ENCODE measurements at regions of chr1 and their contacts with region 1.

Region 1: DNA sequence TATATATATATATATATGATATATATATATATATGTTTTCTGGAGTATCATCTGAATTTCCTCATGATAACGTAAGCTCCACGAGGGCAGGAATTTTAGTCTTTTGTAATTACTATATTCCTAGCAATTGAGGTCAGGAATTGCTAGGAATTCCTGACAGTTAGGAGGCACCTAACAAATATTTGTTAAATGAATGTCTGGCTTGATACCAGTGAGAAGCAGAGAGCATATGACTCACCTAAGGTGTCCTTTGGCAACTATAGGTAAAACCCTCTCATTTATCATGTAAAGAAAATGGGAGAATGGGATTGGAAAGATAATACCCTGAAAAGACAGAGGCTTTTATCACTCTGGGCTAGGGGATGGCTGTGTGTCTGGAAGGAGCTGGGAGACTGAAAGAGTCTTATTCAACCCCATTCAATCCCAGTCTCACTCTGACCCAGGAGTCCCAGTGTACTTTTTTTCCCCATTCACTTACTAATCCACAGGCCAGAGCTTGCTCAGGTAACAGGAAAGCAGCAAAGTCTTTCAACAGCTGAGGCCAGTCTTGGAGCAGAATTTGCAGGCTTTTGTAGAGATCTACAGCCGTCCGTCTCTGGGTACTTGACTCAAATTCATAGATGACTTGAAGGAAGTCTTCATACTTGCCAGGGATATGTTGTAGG is 71.2 kb downstream of the DAP3 start:
- DNase-seq: no peak
- ATAC-seq: no peak

Region 2: GRCh38 chr1:155816351-155816750 is 56.3 kb after region 1 on chr1:
- intact Hi-C with region 1: loop called (anchors 10 kb)
- DNase-seq: no peak
- ATAC-seq: no peak